Activated T-helper 1 cell treated with anti-CD3 and anti-CD28 coated beads, Interleukin-12 subunit alpha, Interleukin-12 subunit beta, Interleukin-2, Interleukin-4 antibody, amounts not matched to agents 30 ng/mL and 10 ng/mL and 1 ng/mL, durations not matched to agents 14 hours and 24 hours and 36 hours (primary cell): ENCODE measurements at regions of chr14 and their contacts with region 1.

Region 1: GRCh38 chr14:45083971-45084722 is at the start of gene PRPF39:
- DNase-seq: peak; percentile 95
- H3K4me3 Mint-ChIP-seq: peak within 1 kb of the TSS; percentile 97
- H3K27ac Mint-ChIP-seq: peak within 1 kb of the TSS; percentile 95
- H3K4me1 Mint-ChIP-seq: peaks cover 57% of the 10 kb centered on the region
- H3K27me3 Mint-ChIP-seq: no peaks in the 10 kb centered on the region
- total RNA-seq, gene PRPF39: 51.2 and 55.7 TPM in 2 replicates

Region 2: GRCh38 chr14:44897045-44897844 is 186.9 kb before region 1 on chr14:
- intact Hi-C with region 1: loop called (anchors 1 kb)
- DNase-seq: peak; percentile 85
- H3K4me3 Mint-ChIP-seq: peak overlapping the region; percentile 93
- H3K27ac Mint-ChIP-seq: peak overlapping the region; percentile 72
- H3K4me1 Mint-ChIP-seq: peaks cover 24% of the 10 kb centered on the region
- H3K27me3 Mint-ChIP-seq: peaks cover 6% of the 10 kb centered on the region

Region 3: DNA sequence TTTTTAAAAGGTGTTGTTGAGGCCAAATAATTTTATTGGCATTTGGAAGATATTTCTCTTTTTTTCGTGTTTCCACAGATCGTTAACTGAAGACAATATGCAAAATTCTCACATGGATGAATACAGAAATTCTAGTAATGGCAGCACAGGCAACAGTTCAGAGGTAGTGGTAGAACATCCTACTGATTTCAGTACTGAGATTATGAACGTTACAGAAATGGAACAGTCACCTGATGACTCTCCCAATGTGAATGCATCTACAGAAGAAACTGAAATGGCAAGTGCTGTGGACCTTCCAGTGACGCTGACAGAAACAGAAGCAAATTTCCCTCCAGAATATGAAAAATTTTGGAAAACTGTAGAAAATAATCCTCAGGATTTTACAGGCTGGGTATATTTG is 11.0 kb after region 1 on chr14:
- intact Hi-C with region 1: loop called (anchors 1 kb)
- DNase-seq: no peak
- H3K4me3 Mint-ChIP-seq: no peak overlapping the region
- H3K27ac Mint-ChIP-seq: no peak overlapping the region
- H3K4me1 Mint-ChIP-seq: peaks cover 32% of the 10 kb centered on the region
- H3K27me3 Mint-ChIP-seq: no peaks in the 10 kb centered on the region

Region 4: GRCh38 chr14:45114327-45114726 is 30.2 kb after region 1 on chr14:
- intact Hi-C with region 1: loop called (anchors 1 kb)
- DNase-seq: no peak
- H3K4me3 Mint-ChIP-seq: no peak overlapping the region
- H3K27ac Mint-ChIP-seq: peak overlapping the region; percentile 70
- H3K4me1 Mint-ChIP-seq: peaks cover 14% of the 10 kb centered on the region
- H3K27me3 Mint-ChIP-seq: no peaks in the 10 kb centered on the region